Activated naive CD4-positive, alpha-beta T cell treated with anti-CD3 and anti-CD28 coated beads for 36 hours (primary cell): ENCODE measurements at regions of chr17 and their contacts with region 1.

Region 1: DNA sequence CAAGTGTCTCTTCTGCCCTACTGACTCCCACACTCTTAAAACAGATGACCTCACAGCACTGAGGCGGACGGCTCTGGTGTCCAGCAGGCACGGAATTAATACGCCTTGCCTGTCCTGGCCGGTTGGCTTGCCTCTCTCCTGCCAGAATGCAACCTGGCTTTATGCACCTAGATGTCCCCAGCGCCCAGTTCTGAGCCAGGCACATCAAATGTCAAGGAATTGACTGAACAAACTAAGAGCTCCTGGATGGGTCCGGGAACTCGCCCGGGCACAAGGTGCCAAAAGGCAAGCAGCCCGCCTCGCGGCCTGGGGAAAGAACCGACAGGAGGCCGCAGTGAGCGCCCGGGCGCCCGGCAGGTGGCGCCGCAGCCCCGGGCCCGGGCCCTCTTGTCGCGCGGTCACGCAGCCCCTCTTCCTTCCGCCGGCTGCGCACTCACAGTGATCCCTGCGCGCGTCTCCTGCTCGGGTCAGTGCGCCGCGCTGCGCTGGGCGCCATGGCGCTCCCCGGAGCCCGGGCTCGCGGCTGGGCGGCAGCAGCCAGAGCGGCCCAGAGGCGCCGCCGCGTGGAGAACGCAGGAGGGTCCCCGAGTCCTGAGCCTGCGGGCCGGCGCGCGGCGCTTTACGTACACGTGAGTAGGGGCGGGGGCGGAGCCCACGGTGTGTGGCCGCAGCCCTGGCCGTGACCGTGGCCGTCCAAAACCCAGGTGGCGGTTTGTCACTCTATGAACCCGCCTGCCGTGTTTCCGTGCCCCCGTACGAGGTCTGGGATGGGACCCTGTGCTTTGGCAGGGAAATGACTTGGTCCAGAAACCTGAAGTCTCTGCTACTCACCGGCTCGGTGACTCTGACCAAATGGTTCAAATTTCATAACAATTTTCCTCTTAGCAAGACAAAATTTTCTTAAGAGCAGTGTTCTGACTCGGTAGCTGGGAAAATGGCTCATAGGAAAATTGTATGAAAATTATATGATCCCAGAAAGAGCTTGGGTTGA is at the start of gene RSAD1:
- DNase-seq: peak; percentile 88
- H3K4me3 Mint-ChIP-seq: peak within 1 kb of the TSS; percentile 81
- H3K27ac Mint-ChIP-seq: peak within 1 kb of the TSS; percentile 95
- H3K4me1 Mint-ChIP-seq: peaks cover 25% of the 10 kb centered on the region
- H3K27me3 Mint-ChIP-seq: peaks cover 5% of the 10 kb centered on the region
- total RNA-seq, gene RSAD1: 39.2 to 40.4 TPM

Region 2: GRCh38 chr17:50361561-50362480 is 116.9 kb before region 1 on chr17:
- CTCF ChIA-PET with region 1: interaction called, 15 read pairs
- intact Hi-C with region 1: loop called (anchors 1 kb)
- DNase-seq: peak; percentile 78
- H3K4me3 Mint-ChIP-seq: no peak overlapping the region
- H3K27ac Mint-ChIP-seq: peak overlapping the region; percentile 84
- H3K4me1 Mint-ChIP-seq: peaks cover 9% of the 10 kb centered on the region
- H3K27me3 Mint-ChIP-seq: no peaks in the 10 kb centered on the region

Region 3: DNA sequence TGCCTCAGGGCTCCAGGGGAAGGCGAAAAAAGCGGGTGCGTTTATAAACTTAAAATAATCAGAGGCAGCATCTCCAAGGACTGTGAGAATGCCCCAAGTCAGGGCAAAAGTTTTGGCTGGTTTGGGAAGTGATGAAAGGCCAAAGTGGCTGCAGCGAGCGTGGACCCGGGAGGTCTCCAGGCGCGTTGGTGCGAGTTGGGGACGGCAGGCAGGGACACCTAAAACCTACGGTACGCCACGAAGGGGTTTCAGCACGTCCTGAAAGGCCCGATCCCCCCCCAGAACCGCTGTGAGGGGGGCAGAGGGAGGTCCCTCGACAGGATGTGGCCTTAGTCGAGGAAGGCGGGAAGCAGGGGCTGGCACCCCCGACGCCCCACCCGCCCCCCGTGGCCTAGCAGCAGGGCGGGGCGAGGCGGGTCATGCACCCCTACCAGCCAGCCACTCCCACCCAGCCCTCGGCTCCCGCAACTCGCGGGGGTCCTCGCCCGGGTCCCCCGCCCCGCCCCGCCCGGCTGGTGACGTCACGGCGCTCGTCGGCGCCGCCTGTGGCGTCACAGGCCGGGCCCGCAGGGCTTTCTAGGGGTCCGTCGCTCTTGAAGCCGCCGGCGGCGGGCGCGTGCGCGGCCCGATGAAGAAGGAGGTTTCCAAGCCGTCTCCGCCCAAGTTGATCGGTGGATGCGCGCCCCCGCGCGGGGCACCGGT is 29.3 kb after region 1 on chr17 and contains the start of gene MYCBPAP:
- CTCF ChIA-PET with region 1: interaction called, 8 read pairs
- intact Hi-C with region 1: loop called (anchors 1 kb)
- DNase-seq: peak; percentile 88
- H3K4me3 Mint-ChIP-seq: peak within 1 kb of the TSS; percentile 82
- H3K27ac Mint-ChIP-seq: peak within 1 kb of the TSS; percentile 79
- H3K4me1 Mint-ChIP-seq: peaks cover 51% of the 10 kb centered on the region
- H3K27me3 Mint-ChIP-seq: no peaks in the 10 kb centered on the region
- total RNA-seq, gene MYCBPAP: 5.5 to 5.8 TPM

Region 4: GRCh38 chr17:50560185-50560824 is 81.6 kb after region 1 on chr17 and contains the start of gene CACNA1G:
- CTCF ChIA-PET with region 1: interaction called, 3 read pairs
- intact Hi-C with region 1: loop called (anchors 1 kb)
- DNase-seq: peak; percentile 89
- H3K4me3 Mint-ChIP-seq: peak within 1 kb of the TSS; percentile 66
- H3K27ac Mint-ChIP-seq: no peak within 1 kb of the TSS
- H3K4me1 Mint-ChIP-seq: peaks cover 27% of the 10 kb centered on the region
- H3K27me3 Mint-ChIP-seq: peaks cover 48% of the 10 kb centered on the region
- total RNA-seq, gene CACNA1G: 0.22 to 0.24 TPM

Region 5: GRCh38 chr17:50707289-50708049 is 228.8 kb after region 1 on chr17 and contains the start of gene ANKRD40:
- CTCF ChIA-PET with region 1: no interaction called
- intact Hi-C with region 1: loop called (anchors 2 kb)
- DNase-seq: peak; percentile 94
- H3K4me3 Mint-ChIP-seq: peak within 1 kb of the TSS; percentile 95
- H3K27ac Mint-ChIP-seq: peak within 1 kb of the TSS; percentile 92
- H3K4me1 Mint-ChIP-seq: peaks cover 44% of the 10 kb centered on the region
- H3K27me3 Mint-ChIP-seq: no peaks in the 10 kb centered on the region
- total RNA-seq, gene ANKRD40: 25.7 to 26.5 TPM